CD8-positive, alpha-beta T cell (primary cell): ENCODE measurements at regions of chr10 and their contacts with region 1.

Region 1: DNA sequence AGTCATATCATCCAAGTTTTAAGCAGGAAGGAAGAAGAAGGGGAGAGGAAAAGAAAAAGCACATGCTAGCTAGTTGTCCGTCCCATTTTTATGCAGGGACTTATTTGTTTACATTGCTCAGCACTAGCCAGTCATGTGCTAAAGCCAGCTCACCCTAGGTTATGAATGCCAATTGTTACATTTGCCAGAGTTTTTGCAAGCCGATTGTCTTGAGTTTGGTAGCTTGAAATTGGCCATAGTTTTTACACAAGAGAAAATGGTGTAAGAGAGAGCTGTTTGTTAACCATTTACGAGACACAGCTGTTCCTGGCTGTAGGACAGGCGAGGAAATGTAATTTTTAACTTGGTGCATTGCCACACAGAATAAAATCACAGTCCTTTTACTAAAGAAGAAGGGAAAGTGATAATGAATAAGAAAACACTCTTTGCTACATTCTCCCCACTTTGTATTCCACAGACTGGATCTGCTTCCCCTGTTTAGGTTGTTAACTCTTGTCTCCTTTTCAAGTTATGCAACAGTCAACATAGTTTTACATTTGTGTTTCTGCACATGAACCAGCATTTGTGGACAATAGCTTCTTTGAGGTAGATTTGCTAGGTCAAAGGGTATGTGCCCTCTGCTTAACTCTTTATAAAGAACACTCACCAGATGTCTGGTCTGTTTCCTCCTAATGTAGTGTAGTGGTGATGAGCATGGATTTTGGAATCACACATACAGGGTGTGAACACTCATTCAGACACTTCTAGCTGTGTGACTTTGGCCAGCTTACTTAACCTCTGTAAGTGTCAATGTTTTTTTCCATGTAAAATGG is 357.2 kb downstream of the LRMDA start:
- DNase-seq: no peak
- ATAC-seq: no peak
- H3K4me3 ChIP-seq: no peak overlapping the region
- H3K4me3 Mint-ChIP-seq: no peak overlapping the region
- H3K27ac ChIP-seq: no peak overlapping the region
- H3K27ac Mint-ChIP-seq: no peak overlapping the region
- H3K4me1 ChIP-seq: no peaks in the 10 kb centered on the region
- H3K4me1 Mint-ChIP-seq: no peaks in the 10 kb centered on the region
- H3K27me3 ChIP-seq: no peaks in the 10 kb centered on the region
- H3K27me3 Mint-ChIP-seq: peaks cover 4% of the 10 kb centered on the region
- CTCF ChIP-seq: no peak

Region 2: GRCh38 chr10:75709830-75710229 is 78.8 kb before region 1 on chr10:
- CTCF ChIA-PET with region 1: no interaction called
- POLR2A ChIA-PET with region 1: no interaction called
- intact Hi-C with region 1: loop called in 1 of 2 experiments (anchors 2 kb)
- DNase-seq: no peak
- ATAC-seq: no peak
- H3K4me3 ChIP-seq: no peak overlapping the region
- H3K4me3 Mint-ChIP-seq: no peak overlapping the region
- H3K27ac ChIP-seq: no peak overlapping the region
- H3K27ac Mint-ChIP-seq: no peak overlapping the region
- H3K4me1 ChIP-seq: no peaks in the 10 kb centered on the region
- H3K4me1 Mint-ChIP-seq: no peaks in the 10 kb centered on the region
- H3K27me3 ChIP-seq: peaks cover 0 to 2% of the 10 kb centered on the region in 2 experiments
- H3K27me3 Mint-ChIP-seq: peaks cover 26% of the 10 kb centered on the region
- CTCF ChIP-seq: no peak

Region 3: GRCh38 chr10:75755528-75755927 is 33.1 kb before region 1 on chr10:
- CTCF ChIA-PET with region 1: no interaction called
- POLR2A ChIA-PET with region 1: no interaction called
- intact Hi-C with region 1: no loop called
- DNase-seq: no peak
- ATAC-seq: no peak
- H3K4me3 ChIP-seq: no peak overlapping the region
- H3K4me3 Mint-ChIP-seq: no peak overlapping the region
- H3K27ac ChIP-seq: no peak overlapping the region
- H3K27ac Mint-ChIP-seq: no peak overlapping the region
- H3K4me1 ChIP-seq: no peaks in the 10 kb centered on the region
- H3K4me1 Mint-ChIP-seq: no peaks in the 10 kb centered on the region
- H3K27me3 ChIP-seq: no peaks in the 10 kb centered on the region
- H3K27me3 Mint-ChIP-seq: peaks cover 5% of the 10 kb centered on the region
- CTCF ChIP-seq: no peak

Region 4: GRCh38 chr10:75865413-75866299 is 77.1 kb after region 1 on chr10:
- CTCF ChIA-PET with region 1: no interaction called
- POLR2A ChIA-PET with region 1: no interaction called
- intact Hi-C with region 1: no loop called
- DNase-seq: no peak
- ATAC-seq: no peak
- H3K4me3 ChIP-seq: no peak overlapping the region
- H3K4me3 Mint-ChIP-seq: no peak overlapping the region
- H3K27ac ChIP-seq: no peak overlapping the region
- H3K27ac Mint-ChIP-seq: no peak overlapping the region
- H3K4me1 ChIP-seq: no peaks in the 10 kb centered on the region
- H3K4me1 Mint-ChIP-seq: no peaks in the 10 kb centered on the region
- H3K27me3 ChIP-seq: no peaks in the 10 kb centered on the region
- H3K27me3 Mint-ChIP-seq: no peaks in the 10 kb centered on the region
- CTCF ChIP-seq: no peak